Astrocyte of the cerebellum (primary cell): ENCODE measurements at regions of chr5 and their contacts with region 1.

Region 1: DNA sequence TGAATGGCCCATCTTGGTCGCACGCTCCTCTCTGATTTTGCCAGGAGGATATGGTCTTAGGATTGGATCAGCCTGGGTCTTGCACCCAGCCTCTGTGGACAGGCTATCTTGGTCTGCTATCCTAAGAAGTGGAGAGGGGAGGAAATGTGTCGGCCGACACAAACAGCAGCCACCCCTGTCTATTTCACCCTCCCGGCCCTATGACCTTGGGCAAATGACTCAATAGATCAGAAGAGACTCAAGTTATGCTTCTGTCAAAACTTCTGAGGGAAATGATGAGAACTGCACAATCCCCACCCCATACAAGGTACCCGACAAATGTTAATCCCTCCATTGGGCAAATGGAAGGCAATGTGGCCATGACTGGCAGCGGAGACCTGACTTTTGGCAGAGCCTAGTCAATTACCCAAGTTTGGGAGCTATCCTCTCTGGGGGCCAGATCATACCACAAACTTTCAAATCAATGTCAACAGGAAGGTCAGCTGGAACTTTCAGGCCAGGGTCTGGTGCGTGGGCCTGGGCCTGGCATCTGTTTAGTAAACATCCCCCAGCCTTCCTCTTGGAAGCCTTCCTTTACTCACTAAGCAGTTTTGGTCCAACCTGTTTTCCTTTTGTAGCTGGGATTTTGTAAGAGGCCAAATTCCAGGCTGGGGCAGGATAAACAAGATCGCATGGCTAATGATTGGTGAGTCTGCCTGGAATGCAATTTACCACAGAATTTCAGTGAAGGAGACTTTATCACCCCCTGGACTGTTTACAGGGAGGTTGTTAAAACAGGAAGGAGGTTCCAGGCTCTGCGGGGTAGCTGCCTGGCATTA is 64.2 kb upstream of the CPEB4 start:
- DNase-seq: peak; percentile 81
- H3K4me3 ChIP-seq: no peak overlapping the region
- CTCF ChIP-seq: no peak

Region 2: DNA sequence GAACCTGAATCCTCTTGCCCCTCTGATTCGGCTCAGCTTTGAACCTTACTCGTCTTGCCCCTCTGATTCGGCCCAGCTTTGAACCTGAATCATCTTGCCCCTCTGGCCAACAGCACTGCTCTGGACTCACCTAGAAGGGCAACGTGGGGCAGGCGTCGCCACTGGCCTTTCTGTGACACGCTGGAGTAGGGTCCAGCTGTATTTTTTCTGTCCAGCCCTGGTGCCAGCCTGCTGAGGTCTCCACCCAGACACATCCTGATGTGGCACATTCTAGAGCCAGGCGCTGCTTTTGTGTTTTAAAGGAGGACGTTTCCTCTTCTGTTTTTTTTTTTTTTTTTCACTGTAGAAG is 49.0 kb after region 1 on chr5:
- in situ Hi-C with region 1: loop called (anchors 5 kb)
- DNase-seq: no peak
- H3K4me3 ChIP-seq: no peak overlapping the region
- CTCF ChIP-seq: no peak

Region 3: GRCh38 chr5:174003795-174004194 is 179.9 kb after region 1 on chr5:
- in situ Hi-C with region 1: no loop called
- DNase-seq: no peak
- H3K4me3 ChIP-seq: no peak overlapping the region
- CTCF ChIP-seq: no peak